ENCODE measurements at regions of chr1 and their contacts with region 1.

Region 1: DNA sequence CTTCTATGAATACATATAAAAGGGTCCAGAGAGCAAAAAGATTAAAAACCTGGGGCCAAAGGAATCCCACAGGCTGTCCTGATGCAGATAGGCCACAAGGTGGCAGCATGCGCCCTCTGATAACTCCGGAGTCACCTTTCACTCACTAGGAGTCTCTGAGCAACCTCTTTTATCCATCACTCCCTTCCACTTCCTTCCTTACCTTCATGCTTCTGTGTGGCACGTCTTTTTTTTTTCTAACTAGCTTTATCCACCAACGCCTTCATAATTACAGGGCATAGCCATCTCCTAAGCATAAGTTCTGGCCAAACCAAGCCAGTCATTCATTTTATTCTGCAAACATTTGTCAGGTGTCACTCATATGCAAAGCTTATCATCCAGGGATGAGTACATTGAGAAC is 3.9 kb upstream of the PGLYRP4 start:
- DNase-seq: peak; percentile 67

Region 2: DNA sequence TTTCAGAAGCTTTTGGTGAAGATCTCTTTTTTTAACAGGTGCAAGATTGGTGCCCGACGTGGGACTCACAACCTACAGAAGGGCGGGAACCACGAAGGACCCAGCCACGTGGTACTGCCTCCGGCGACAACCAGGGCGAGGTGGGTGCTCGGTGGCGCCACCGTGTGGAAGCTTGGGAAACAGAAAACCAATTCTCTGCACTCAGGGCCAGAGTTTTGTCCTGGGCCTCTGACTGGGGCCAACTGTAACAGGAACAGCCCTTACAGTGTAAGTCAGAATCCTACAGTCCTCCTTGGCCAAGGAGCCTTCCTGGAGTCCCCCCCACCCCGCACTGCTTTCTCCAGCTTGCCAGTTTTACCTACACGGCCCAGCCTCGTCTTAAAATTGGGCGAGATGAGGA is 52.2 kb after region 1 on chr1:
- in situ Hi-C with region 1: loop called (anchors 10 kb)
- DNase-seq: peak; percentile 44

Region 3: DNA sequence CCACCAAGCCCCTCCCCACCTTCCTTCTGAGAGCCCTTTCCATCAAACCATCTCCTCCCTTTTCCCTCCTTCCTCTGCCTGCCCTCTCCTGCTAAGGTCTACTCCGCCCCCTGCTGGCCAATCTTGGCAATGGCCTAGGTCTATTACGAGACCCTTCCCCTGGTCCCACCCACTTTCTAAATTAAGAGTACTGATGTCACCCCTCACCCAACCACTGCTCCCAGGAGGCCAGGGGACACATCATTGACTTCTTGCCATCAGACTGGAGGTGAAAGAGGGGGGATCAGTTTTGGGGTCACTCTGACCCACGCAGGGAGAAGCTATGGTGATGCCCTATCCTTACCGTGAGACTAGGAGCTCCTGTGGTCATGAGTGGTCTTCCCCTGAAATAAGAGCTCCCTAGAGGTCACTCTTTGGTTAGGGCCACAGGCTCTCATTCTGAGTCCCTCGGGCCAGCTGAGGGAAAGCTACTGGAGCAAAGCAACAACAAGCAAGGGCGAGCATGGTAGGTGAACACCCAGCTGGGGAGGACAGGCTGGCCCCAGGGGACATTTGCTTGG is 142.5 kb after region 1 on chr1:
- in situ Hi-C with region 1: loop called (anchors 10 kb)
- DNase-seq: peak; percentile 76